Activated CD4-positive, alpha-beta T cell treated with anti-CD3 and anti-CD28 coated beads for 36 hours (primary cell): ENCODE measurements at regions of chr14 and their contacts with region 1.

Region 1: GRCh38 chr14:99271951-99272631 is at the start of gene BCL11B:
- DNase-seq: peak; percentile 95
- ATAC-seq: peak; percentile 76
- H3K4me3 Mint-ChIP-seq: peak within 1 kb of the TSS; percentile 87
- H3K27ac Mint-ChIP-seq: peak within 1 kb of the TSS; percentile 98
- H3K4me1 Mint-ChIP-seq: peaks cover 32% of the 10 kb centered on the region
- H3K27me3 Mint-ChIP-seq: peaks cover 2% of the 10 kb centered on the region
- total RNA-seq, gene BCL11B: 62.1 to 66.2 TPM

Region 2: GRCh38 chr14:97620066-97620465 is 1652.0 kb before region 1 on chr14:
- CTCF ChIA-PET with region 1: no interaction called
- POLR2A ChIA-PET with region 1: no interaction called
- intact Hi-C with region 1: loop called in 1 of 2 experiments (anchors 5 kb)
- DNase-seq: no peak
- ATAC-seq: no peak
- H3K4me3 Mint-ChIP-seq: peak overlapping the region; percentile 67
- H3K27ac Mint-ChIP-seq: peak overlapping the region; percentile 93
- H3K4me1 Mint-ChIP-seq: peaks cover 45% of the 10 kb centered on the region
- H3K27me3 Mint-ChIP-seq: no peaks in the 10 kb centered on the region

Region 3: DNA sequence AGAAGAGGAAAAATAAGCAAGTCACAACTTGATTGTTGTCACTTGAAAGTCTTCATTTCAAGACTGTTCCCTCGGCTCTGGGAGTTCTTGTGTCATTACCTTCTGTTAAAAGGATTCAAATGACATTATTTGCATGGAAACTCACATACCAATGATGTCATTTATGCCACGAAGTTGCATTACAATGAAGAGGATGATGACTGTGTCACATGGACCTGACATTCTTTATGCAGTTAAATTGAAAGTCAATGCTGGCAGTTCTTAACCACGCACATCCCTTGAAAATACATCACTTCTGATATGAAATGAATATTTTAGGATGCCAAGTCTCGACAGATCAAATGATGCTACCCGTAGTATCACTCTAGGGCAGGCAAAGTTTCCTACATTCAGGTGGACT is 1405.4 kb before region 1 on chr14:
- CTCF ChIA-PET with region 1: no interaction called
- POLR2A ChIA-PET with region 1: no interaction called
- intact Hi-C with region 1: loop called in 1 of 2 experiments (anchors 2 kb)
- DNase-seq: no peak
- ATAC-seq: peak; percentile 86
- H3K4me3 Mint-ChIP-seq: no peak overlapping the region
- H3K27ac Mint-ChIP-seq: no peak overlapping the region
- H3K4me1 Mint-ChIP-seq: peaks cover 19% of the 10 kb centered on the region
- H3K27me3 Mint-ChIP-seq: no peaks in the 10 kb centered on the region

Region 4: GRCh38 chr14:98138666-98139065 is 1133.4 kb before region 1 on chr14:
- CTCF ChIA-PET with region 1: interaction called, 17 read pairs
- POLR2A ChIA-PET with region 1: interaction called, 4 read pairs
- intact Hi-C with region 1: loop called (anchors 2 kb)
- DNase-seq: peak; percentile 76
- ATAC-seq: peak; percentile 43
- H3K4me3 Mint-ChIP-seq: peak overlapping the region; percentile 65
- H3K27ac Mint-ChIP-seq: peak overlapping the region; percentile 98
- H3K4me1 Mint-ChIP-seq: peaks cover 87% of the 10 kb centered on the region
- H3K27me3 Mint-ChIP-seq: no peaks in the 10 kb centered on the region

Region 5: DNA sequence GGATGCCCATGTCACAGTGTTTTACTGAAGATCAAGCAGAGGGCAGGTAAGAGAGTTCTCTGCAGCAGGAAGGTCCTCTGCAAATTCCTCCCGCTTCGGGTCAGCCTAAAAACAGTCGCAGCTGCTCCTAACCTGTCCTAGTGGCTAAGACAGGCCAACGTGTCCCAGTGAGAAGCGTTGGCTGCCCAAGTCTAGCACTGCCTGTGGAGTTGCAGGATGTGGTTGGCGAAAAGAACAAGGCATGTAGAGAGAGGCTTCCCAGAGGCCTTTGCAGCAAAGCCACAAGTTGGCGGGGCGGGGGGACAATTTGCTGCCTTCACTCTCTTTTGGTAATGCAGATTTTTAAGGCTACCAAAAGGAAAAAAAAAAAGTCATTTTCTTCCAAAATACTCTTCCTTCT is 340.2 kb before region 1 on chr14:
- CTCF ChIA-PET with region 1: no interaction called
- POLR2A ChIA-PET with region 1: no interaction called
- intact Hi-C with region 1: loop called (anchors 5 kb)
- DNase-seq: peak; percentile 75
- ATAC-seq: peak; percentile 80
- H3K4me3 Mint-ChIP-seq: peak overlapping the region; percentile 45
- H3K27ac Mint-ChIP-seq: peak overlapping the region; percentile 85
- H3K4me1 Mint-ChIP-seq: peaks cover 89% of the 10 kb centered on the region
- H3K27me3 Mint-ChIP-seq: no peaks in the 10 kb centered on the region

Region 6: GRCh38 chr14:99333841-99334635 is 61.9 kb after region 1 on chr14:
- CTCF ChIA-PET with region 1: no interaction called
- POLR2A ChIA-PET with region 1: no interaction called
- intact Hi-C with region 1: no loop called
- DNase-seq: no peak
- ATAC-seq: no peak
- H3K4me3 Mint-ChIP-seq: no peak overlapping the region
- H3K27ac Mint-ChIP-seq: no peak overlapping the region
- H3K4me1 Mint-ChIP-seq: no peaks in the 10 kb centered on the region
- H3K27me3 Mint-ChIP-seq: peaks cover 12% of the 10 kb centered on the region

Region 7: DNA sequence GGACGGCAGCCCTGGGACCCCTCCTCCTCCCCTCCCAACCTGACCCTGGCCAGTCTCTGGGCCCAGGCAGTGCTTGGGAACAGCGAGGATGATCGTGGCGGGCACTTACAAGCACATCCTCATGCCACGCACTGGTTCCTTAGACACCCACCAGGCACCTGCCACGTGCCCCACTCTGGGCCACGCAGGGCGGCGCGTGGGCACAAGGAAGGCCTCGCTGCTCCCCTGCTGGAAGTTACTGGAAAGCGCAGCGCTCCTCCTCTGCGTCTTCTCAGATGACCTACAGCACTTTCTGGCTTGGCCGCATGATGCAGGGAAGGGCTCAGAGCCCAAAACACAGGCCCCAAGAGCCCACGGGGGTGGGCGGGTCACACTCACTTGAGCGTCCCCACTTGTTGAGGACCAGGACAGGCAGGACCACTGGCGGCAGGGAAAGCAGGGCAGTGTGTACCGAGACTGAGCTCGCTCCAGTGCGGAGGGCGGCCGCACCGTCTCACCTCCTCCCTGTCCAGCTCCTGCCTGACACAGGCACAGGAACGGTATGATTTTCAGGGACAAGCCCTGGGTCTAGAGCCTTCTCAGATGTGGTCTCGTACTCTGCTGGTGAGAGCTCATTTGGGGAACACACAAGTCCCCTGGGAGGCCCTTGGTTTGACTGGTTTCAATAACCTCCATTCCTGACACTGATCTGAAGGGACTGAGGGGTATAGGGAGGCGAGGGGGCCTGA is 664.8 kb after region 1 on chr14:
- CTCF ChIA-PET with region 1: no interaction called
- POLR2A ChIA-PET with region 1: no interaction called
- intact Hi-C with region 1: no loop called
- DNase-seq: no peak
- ATAC-seq: no peak
- H3K4me3 Mint-ChIP-seq: no peak overlapping the region
- H3K27ac Mint-ChIP-seq: no peak overlapping the region
- H3K4me1 Mint-ChIP-seq: no peaks in the 10 kb centered on the region
- H3K27me3 Mint-ChIP-seq: no peaks in the 10 kb centered on the region